Posterior vena cava (tissue), 2 donors: ENCODE measurements at regions of chr14 and their contacts with region 1.

Region 1: DNA sequence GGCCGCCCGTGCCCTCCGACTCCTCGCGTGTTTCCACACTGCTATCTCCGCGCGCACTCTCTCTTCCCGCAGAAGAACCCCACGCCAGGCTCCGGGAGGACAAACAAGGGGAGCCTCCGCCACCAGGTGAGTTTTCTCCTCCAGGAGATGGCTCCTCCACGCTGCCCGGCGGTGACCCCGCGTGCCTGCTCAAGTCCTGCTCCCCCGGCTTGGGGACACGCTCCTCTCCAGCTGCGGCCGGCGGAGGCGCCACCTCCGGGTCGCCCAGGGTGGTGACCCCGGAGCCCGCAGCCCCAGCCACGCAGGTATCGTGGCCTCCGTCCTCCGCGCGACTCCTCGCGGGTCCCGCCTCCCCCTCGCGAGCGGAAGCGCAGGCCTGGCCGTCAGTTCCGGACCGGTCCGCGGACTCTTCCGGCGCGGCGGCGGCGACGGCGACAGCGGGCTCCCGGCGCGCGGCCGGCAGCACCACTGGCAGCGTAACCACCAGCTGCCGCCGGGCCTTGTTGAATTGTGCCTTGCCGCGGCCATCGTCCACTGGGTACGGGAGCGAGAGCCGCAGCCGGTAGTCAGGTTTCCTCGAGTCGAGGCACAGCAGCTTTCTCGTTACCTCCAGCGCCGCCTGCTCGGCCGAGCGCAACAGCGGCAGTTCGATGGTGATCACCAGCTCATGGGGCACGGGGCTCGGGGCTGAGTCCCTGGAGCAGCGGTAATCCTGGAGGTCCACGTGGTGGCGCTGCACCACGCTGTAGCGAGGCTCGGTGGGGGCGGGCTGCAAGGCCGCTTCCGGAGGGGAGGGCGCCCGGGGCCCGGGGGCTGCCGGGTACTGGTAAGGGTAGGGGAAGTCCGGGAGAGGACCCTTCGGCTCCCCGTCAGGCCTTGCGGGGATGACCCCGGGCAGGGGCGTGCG is 1.2 kb downstream of the DNAAF2 start:
- DNase-seq: peak; percentile 98

Region 2: GRCh38 chr14:48936362-48936761 is 697.5 kb before region 1 on chr14:
- intact Hi-C with region 1: no loop called
- DNase-seq: no peak

Region 3: GRCh38 chr14:49677643-49678042 is 43.8 kb after region 1 on chr14:
- intact Hi-C with region 1: no loop called
- DNase-seq: no peak

Region 4: GRCh38 chr14:49692811-49693734 is 59.2 kb after region 1 on chr14 and contains the start of gene KLHDC1:
- intact Hi-C with region 1: loop called in 1 of 2 experiments (anchors 10 kb)
- DNase-seq: peak; percentile 97
- total RNA-seq, gene KLHDC1: 7.7 to 11.9 TPM

Region 5: DNA sequence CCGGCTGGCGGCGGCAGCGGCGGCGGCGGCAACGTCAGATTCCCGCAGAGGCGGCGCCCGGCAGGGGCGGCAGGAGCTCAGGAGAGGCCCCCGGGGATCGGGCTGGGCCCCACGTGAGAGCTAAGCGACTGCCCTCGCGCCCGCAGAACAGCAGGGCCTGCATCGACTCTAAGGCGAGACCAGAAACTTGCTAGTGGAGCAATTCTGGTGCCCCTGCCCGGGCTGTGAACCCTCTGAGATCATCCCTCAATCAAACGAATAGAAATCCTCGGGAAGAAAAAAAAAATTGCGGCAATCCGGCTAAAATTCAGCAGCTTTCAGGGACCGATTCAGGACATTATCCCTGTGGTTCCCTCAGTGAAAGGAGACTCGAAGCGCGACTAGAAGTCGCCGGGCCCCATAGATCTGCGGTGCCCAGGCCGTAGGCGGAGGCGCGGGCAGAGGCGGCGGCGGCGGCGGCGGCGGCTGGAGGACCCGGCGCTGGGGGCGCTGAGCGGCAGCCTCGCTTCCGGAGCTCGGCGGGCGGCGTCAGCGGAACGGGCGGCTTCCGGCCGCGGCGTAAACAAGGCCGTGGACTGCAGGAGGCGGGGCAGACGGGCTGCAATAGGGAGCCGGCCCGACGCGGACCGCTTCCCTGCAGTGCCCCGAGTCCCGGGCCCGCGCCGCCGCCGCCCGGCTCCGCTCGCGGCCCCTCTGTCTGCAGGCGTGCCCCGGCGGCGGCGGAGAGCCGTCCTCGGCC is 133.8 kb after region 1 on chr14 and contains the start of gene KLHDC2:
- intact Hi-C with region 1: loop called in 1 of 2 experiments (anchors 10 kb)
- DNase-seq: peak; percentile 97
- total RNA-seq, gene KLHDC2: 42.7 to 61.5 TPM